Activated CD8-positive, alpha-beta T cell treated with anti-CD3 and anti-CD28 coated beads, Interleukin-2, amount 10 ng/mL, durations not matched to agents 7 days and 5 days (primary cell): ENCODE measurements at regions of chr1 and their contacts with region 1.

Region 1: GRCh38 chr1:24964811-24965570 is 34.9 kb upstream of the RUNX3 start:
- DNase-seq: peak; percentile 99
- ATAC-seq: peak; percentile 81
- H3K4me3 Mint-ChIP-seq: peak overlapping the region; percentile 92
- H3K27ac Mint-ChIP-seq: peak overlapping the region; percentile 98
- H3K4me1 Mint-ChIP-seq: peaks cover 67% of the 10 kb centered on the region
- H3K27me3 Mint-ChIP-seq: no peaks in the 10 kb centered on the region

Region 2: GRCh38 chr1:24930204-24931145 is 34.5 kb before region 1 on chr1 and contains the start of gene RUNX3:
- CTCF ChIA-PET with region 1: interaction called, 23 read pairs
- POLR2A ChIA-PET with region 1: interaction called, 40 read pairs
- DNase-seq: peak; percentile 92
- ATAC-seq: peak; percentile 79
- H3K4me3 Mint-ChIP-seq: peak within 1 kb of the TSS; percentile 95
- H3K27ac Mint-ChIP-seq: peak within 1 kb of the TSS; percentile 85
- H3K4me1 Mint-ChIP-seq: peaks cover 80% of the 10 kb centered on the region
- H3K27me3 Mint-ChIP-seq: no peaks in the 10 kb centered on the region
- total RNA-seq, gene RUNX3: 144 to 147 TPM

Region 3: GRCh38 chr1:24987875-24988557 is 23.0 kb after region 1 on chr1:
- CTCF ChIA-PET with region 1: interaction called, 77 read pairs
- POLR2A ChIA-PET with region 1: interaction called, 106 read pairs
- DNase-seq: no peak
- ATAC-seq: no peak
- H3K4me3 Mint-ChIP-seq: no peak overlapping the region
- H3K27ac Mint-ChIP-seq: peak overlapping the region; percentile 31
- H3K4me1 Mint-ChIP-seq: peaks cover 98% of the 10 kb centered on the region
- H3K27me3 Mint-ChIP-seq: no peaks in the 10 kb centered on the region

Region 4: GRCh38 chr1:25011943-25012638 is 47.1 kb after region 1 on chr1:
- CTCF ChIA-PET with region 1: interaction called, 5 read pairs
- POLR2A ChIA-PET with region 1: interaction called, 12 read pairs
- DNase-seq: no peak
- ATAC-seq: peak; percentile 47
- H3K4me3 Mint-ChIP-seq: no peak overlapping the region
- H3K27ac Mint-ChIP-seq: peak overlapping the region; percentile 60
- H3K4me1 Mint-ChIP-seq: peaks cover 81% of the 10 kb centered on the region
- H3K27me3 Mint-ChIP-seq: no peaks in the 10 kb centered on the region

Region 5: DNA sequence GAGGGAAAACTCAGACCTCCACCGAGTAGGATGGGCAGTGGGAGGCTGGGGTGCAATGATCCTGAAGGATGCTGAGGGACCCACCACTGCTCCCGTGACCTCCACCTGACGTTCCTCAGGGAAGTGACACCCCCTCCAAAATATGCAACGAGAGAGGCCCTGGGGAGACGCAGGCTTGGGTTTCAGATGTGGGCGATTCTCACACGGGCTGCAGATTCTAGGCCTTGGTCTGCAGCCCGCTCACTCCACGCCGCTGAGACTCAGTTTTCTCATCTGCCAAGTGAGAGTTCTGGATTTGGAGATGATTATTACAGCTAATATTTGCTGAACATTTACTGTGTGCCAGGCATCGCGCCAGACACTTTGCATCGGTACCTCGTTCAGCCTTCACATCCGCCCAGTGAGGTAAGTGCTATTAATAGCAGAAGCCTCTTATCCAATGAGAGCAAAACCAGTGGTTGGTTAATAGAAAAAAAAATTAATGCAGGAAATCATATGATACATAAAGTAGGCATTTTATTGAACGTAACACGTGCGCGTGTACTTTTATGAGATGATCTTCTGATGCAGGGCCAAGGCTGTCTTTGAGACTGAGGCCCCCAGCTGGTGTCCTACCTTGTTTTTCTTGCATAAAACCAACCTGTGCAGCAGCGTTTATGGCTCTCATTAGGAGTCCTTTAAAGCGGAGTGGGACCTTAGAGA is 67.1 kb after region 1 on chr1:
- CTCF ChIA-PET with region 1: interaction called, 225 read pairs
- POLR2A ChIA-PET with region 1: interaction called, 96 read pairs
- DNase-seq: peak; percentile 82
- ATAC-seq: peak; percentile 32
- H3K4me3 Mint-ChIP-seq: peak overlapping the region; percentile 65
- H3K27ac Mint-ChIP-seq: no peak overlapping the region
- H3K4me1 Mint-ChIP-seq: peaks cover 39% of the 10 kb centered on the region
- H3K27me3 Mint-ChIP-seq: no peaks in the 10 kb centered on the region

Region 6: GRCh38 chr1:25204797-25205480 is 239.9 kb after region 1 on chr1:
- CTCF ChIA-PET with region 1: no interaction called
- POLR2A ChIA-PET with region 1: no interaction called
- DNase-seq: peak; percentile 43
- ATAC-seq: no peak
- H3K4me3 Mint-ChIP-seq: no peak overlapping the region
- H3K27ac Mint-ChIP-seq: no peak overlapping the region
- H3K4me1 Mint-ChIP-seq: no peaks in the 10 kb centered on the region
- H3K27me3 Mint-ChIP-seq: peaks cover 21% of the 10 kb centered on the region